Panc1 (cell line): ENCODE measurements at regions of chrX and their contacts with region 1.

Region 1: GRCh38 chrX:69813677-69814076 is 197.8 kb downstream of the EDA start:
- DNase-seq: no peak
- ATAC-seq: no peak
- H3K4me3 ChIP-seq: no peak overlapping the region
- H3K27ac ChIP-seq: no peak overlapping the region
- H3K4me1 ChIP-seq: no peaks in the 10 kb centered on the region
- H3K27me3 ChIP-seq: no peaks in the 10 kb centered on the region
- CTCF ChIP-seq: no peak

Region 2: GRCh38 chrX:69795702-69796101 is 18.0 kb before region 1 on chrX:
- CTCF ChIA-PET with region 1: no interaction called
- POLR2A ChIA-PET with region 1: no interaction called
- in situ Hi-C with region 1: no loop called
- intact Hi-C with region 1: no loop called
- DNase-seq: no peak
- ATAC-seq: no peak
- H3K4me3 ChIP-seq: no peak overlapping the region
- H3K27ac ChIP-seq: no peak overlapping the region
- H3K4me1 ChIP-seq: no peaks in the 10 kb centered on the region
- H3K27me3 ChIP-seq: no peaks in the 10 kb centered on the region
- CTCF ChIP-seq: no peak

Region 3: DNA sequence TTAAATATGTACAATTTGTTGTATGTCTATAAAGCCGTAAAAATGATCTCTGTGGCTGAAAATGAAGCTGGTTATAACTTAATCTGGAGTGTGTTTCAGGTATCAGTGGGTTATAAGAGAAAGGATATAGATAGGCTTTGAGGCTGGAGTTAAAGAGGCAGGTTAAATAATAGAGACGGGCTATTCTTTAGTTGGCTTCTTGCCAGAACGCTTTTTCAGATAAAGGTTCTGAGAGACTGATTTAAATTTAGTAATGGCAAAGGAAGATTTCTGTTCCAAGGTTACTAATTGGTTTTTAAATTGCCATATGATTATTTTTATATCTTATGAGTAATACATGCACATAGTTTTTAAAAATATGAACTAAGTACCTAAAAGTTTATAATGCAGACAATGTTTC is 118.6 kb after region 1 on chrX:
- CTCF ChIA-PET with region 1: no interaction called
- POLR2A ChIA-PET with region 1: interaction called, 10 read pairs
- in situ Hi-C with region 1: no loop called
- intact Hi-C with region 1: no loop called
- DNase-seq: no peak
- ATAC-seq: no peak
- H3K4me3 ChIP-seq: no peak overlapping the region
- H3K27ac ChIP-seq: no peak overlapping the region
- H3K4me1 ChIP-seq: no peaks in the 10 kb centered on the region
- H3K27me3 ChIP-seq: no peaks in the 10 kb centered on the region
- CTCF ChIP-seq: no peak

Region 4: GRCh38 chrX:70878902-70879301 is 1065.2 kb after region 1 on chrX:
- CTCF ChIA-PET with region 1: no interaction called
- POLR2A ChIA-PET with region 1: no interaction called
- in situ Hi-C with region 1: no loop called
- intact Hi-C with region 1: no loop called
- DNase-seq: no peak
- ATAC-seq: no peak
- H3K4me3 ChIP-seq: no peak overlapping the region
- H3K27ac ChIP-seq: no peak overlapping the region
- H3K4me1 ChIP-seq: no peaks in the 10 kb centered on the region
- H3K27me3 ChIP-seq: 0 out of 2 replicates have a peak, but pooled peaks cover 2% of the 10 kb centered on the region
- CTCF ChIP-seq: no peak